Motor neuron (in vitro differentiated cells): ENCODE measurements at regions of chr17 and their contacts with region 1.

Region 1: GRCh38 chr17:10729334-10730193 is at the start of gene TMEM220:
- ATAC-seq: peak; percentile 71 to 92 (median 88)
- H3K4me3 ChIP-seq: peak within 1 kb of the TSS; percentile 26 to 41 (median 38)
- H3K27ac ChIP-seq: peak within 1 kb of the TSS in 1 of 2 donors; percentile 62
- H3K4me1 ChIP-seq: peaks cover 2 to 3% of the 10 kb centered on the region in 2 donors
- total RNA-seq, gene TMEM220: 1.1 to 18.7 (median 1.9) TPM

Region 2: DNA sequence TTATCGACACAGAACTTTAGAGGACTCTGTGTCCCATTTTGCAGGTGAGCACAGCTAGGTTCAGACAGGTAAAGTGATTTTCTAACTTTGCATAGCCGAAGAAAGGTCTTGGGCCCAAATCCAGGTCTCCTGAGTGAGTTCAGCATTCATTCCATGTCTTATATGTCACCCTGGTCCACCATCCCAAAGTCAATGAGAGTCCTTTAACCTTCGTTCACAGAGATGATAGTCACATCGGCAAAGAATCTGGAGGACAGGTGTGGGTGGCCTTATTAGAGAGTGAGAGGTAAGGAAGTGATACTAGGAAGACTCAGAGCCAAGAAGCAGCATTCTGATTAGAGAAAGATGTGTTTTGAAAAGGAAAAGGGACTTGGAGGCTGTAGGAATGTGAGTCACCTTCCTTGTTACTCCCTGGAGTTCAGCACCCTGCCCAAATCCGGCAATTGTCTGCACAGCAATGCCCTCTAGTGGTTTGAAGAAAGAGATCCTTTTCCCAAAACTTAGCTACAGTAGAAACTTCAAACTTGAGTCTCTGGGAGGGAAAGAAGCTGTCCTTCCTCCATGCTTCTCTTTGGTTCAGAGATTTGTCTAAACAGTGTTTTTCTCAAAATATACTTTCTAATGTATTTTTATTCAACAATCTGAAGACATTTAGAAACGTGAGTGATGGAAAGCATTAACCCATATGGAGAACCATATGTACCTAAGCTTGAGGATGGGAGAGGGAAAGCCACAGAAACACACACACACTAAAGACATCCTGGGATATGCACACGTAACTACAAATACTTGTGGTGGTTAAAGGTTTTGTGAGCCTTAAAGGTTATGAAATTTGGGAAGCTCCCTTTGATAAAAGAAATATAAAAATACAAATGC is 415.0 kb after region 1 on chr17:
- in situ Hi-C with region 1: loop called in 1 of 9 experiments (anchors 25 kb)
- ATAC-seq: peak in 4 of 8 experiments; percentile 30 to 87 (median 84)
- H3K4me3 ChIP-seq: no peak overlapping the region
- H3K27ac ChIP-seq: no peak overlapping the region
- H3K4me1 ChIP-seq: no peaks in the 10 kb centered on the region

Region 3: GRCh38 chr17:11779892-11780291 is 1050.3 kb after region 1 on chr17:
- in situ Hi-C with region 1: no loop called
- ATAC-seq: peak in 3 of 8 experiments; percentile 55 to 90 (median 75)
- H3K4me3 ChIP-seq: no peak overlapping the region
- H3K27ac ChIP-seq: no peak overlapping the region
- H3K4me1 ChIP-seq: no peaks in the 10 kb centered on the region